IMR-90 (cell line): ENCODE measurements at regions of chr1 and their contacts with region 1.

Region 1: DNA sequence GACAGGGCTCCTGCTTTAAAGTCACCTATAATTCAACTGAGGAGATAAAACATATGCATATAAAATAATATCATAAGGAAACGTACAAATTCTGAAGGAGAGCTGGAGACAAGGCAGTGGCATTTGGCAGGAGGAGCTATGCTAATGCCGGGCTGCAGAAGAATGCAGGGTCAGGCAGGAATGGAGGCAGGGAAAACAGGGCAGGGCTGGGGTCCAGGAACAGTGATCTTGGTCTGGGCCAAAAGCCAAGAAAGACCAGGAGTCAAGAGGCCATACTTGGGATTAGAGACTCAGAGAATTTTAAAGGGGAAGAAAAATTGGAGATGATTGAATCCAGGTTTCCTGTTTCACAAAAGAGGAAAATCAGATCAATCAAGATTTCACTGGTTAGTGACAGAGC is 20.0 kb upstream of the BRDT start:
- DNase-seq: no peak
- ATAC-seq: peak; percentile 41; the same call in 1 of the 2 replicates
- H3K4me3 ChIP-seq: no peak overlapping the region
- H3K27ac ChIP-seq: no peak overlapping the region
- H3K4me1 ChIP-seq: peaks cover 2% of the 10 kb centered on the region
- H3K27me3 ChIP-seq: no peaks in the 10 kb centered on the region
- CTCF ChIP-seq: no peak
- POLR2A ChIP-seq: no peak
- RAD21 ChIP-seq: no peak

Region 2: DNA sequence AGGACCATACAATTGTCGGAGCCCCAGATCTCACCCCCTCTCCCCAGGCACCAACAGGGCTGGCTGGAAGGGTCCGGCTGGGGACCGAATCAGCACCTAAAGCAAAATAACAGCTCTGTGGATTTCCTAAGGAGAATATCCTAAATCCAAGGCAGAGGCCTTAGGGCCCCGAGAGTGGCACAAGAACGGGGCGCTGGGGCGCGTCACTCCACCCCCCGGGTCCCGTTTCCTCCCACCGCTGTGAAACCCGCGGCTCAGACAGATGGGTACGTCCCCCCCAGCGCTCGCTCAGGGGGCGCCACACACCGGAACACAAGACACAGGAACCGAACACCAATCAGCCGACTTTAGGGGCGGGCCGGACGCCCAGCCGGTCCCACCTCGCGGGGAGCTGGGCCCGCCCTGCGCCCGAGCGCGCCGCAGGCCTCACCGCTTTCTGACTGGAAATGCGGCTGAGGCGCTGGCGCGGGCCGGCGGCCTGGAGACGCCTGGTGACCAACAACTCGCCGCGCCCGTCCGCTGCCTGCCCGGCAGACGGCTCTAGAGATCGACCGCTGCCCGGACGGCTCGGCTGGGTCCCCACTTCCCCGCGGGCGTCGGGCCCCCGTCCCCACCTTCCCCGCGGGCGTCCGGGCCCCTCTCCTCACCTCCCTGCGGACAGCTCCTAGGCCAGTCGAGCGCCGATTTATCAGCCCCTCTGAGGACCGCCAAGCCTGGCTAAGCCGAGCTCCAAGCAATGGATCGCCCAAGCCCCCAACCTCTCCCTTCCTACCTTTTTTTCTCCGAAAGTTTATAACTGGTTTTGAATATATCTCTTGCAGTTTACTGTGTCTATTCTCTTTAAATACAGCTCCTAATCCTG is 524.9 kb before region 1 on chr1 and contains the start of gene HFM1:
- CTCF ChIA-PET with region 1: no interaction called
- POLR2A ChIA-PET with region 1: no interaction called
- dilution Hi-C with region 1: no loop called
- in situ Hi-C with region 1: no loop called
- intact Hi-C with region 1: loop called (anchors 2 kb)
- DNase-seq: peak; percentile 69
- ATAC-seq: peak; percentile 99
- H3K4me3 ChIP-seq: peak within 1 kb of the TSS; percentile 52
- H3K27ac ChIP-seq: no peak within 1 kb of the TSS; the same call in 1 of the 2 replicates
- H3K4me1 ChIP-seq: no peaks in the 10 kb centered on the region
- H3K27me3 ChIP-seq: no peaks in the 10 kb centered on the region; the same call in 1 of the 2 replicates
- CTCF ChIP-seq: no peak
- POLR2A ChIP-seq: no peak
- RAD21 ChIP-seq: no peak
- total RNA-seq, gene HFM1: 0.18 and 0.83 TPM in 2 replicates

Region 3: DNA sequence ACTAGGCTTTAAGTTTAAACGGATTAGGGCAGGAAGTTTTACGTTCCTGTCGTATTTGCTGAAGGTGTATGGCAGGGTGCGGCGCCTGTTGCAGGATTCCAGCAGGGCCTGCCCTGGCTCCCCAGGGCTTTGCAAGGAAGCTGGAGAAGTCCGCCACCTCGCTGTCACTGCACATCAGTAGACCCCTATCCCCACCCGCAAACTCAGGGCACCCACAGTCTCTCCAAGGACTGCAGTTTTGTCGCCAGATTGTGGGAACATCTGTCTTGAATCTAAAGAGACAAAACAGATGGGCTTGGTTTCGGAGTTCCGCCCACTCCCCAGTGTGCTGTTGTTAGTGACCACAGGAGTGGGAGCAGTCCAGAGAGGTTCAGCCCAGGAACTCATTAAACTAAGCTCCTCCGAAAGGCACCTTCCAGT is 317.7 kb before region 1 on chr1:
- CTCF ChIA-PET with region 1: no interaction called
- POLR2A ChIA-PET with region 1: no interaction called
- dilution Hi-C with region 1: no loop called
- in situ Hi-C with region 1: no loop called
- intact Hi-C with region 1: no loop called
- DNase-seq: no peak
- ATAC-seq: no peak
- H3K4me3 ChIP-seq: no peak overlapping the region
- H3K27ac ChIP-seq: no peak overlapping the region
- H3K4me1 ChIP-seq: peaks cover 6% of the 10 kb centered on the region; the same call in 1 of the 2 replicates
- H3K27me3 ChIP-seq: no peaks in the 10 kb centered on the region
- CTCF ChIP-seq: no peak
- POLR2A ChIP-seq: no peak
- RAD21 ChIP-seq: no peak

Region 4: GRCh38 chr1:91846007-91846617 is 83.1 kb before region 1 on chr1:
- CTCF ChIA-PET with region 1: interaction called, 3 read pairs
- POLR2A ChIA-PET with region 1: no interaction called
- dilution Hi-C with region 1: no loop called
- in situ Hi-C with region 1: no loop called
- intact Hi-C with region 1: loop called (anchors 5 kb)
- DNase-seq: peak; percentile 46
- ATAC-seq: peak; percentile 45
- H3K4me3 ChIP-seq: no peak overlapping the region
- H3K27ac ChIP-seq: peak overlapping the region; percentile 65; the same call in 1 of the 2 replicates
- H3K4me1 ChIP-seq: peaks cover 10% of the 10 kb centered on the region
- H3K27me3 ChIP-seq: no peaks in the 10 kb centered on the region
- CTCF ChIP-seq: no peak
- POLR2A ChIP-seq: no peak
- RAD21 ChIP-seq: no peak

Region 5: GRCh38 chr1:92291372-92291999 is 362.2 kb after region 1 on chr1:
- CTCF ChIA-PET with region 1: interaction called, 5 read pairs
- POLR2A ChIA-PET with region 1: no interaction called
- dilution Hi-C with region 1: no loop called
- in situ Hi-C with region 1: no loop called
- intact Hi-C with region 1: loop called (anchors 2 kb)
- DNase-seq: peak; percentile 77
- ATAC-seq: peak; percentile 92
- H3K4me3 ChIP-seq: no peak overlapping the region
- H3K27ac ChIP-seq: no peak overlapping the region
- H3K4me1 ChIP-seq: no peaks in the 10 kb centered on the region
- H3K27me3 ChIP-seq: no peaks in the 10 kb centered on the region
- CTCF ChIP-seq: peak; percentile 87
- POLR2A ChIP-seq: no peak
- RAD21 ChIP-seq: peak; percentile 85